Mammary epithelial cell (primary cell): ENCODE measurements at regions of chrX and their contacts with region 1.

Region 1: DNA sequence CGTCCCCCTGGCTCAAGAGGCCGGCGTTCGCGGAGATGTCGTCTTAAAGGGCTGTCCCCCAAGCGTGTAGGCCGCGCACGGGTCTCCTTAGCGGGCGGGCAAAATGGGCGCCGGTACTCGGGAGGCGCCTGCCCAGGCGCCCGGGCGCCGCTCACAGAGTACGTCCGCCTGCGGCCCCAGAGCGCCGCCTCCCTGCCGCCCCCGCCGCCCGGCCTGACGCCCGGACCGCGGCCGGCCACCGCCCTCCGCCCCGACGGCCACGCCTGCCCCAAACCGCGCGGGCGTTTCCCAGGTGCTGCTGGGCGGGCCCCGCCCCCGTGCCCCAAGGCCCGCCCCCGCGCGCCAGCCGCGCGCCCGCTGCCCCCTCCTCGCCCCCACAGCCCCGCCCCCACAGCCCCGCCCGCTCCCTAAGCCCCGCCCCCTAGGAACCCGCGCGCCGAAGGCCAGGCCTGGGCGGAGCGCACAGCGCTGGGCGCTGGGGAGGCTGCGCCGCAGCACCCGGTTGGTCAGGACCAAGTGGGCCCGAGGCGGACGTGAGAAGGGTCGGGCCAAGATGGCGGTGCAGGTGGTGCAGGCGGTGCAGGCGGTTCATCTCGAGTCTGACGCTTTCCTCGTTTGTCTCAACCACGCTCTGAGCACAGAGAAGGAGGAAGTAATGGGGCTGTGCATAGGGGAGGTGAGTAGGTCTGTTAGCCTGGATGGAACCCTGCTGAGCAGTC is at the starts of genes BRCC3, CMC4 and MTCP1:
- DNase-seq: peak; percentile 75
- H3K4me3 ChIP-seq: peak within 1 kb of the TSS; percentile 69 to 82 (median 75)
- H3K27ac ChIP-seq: peak within 1 kb of the TSS; percentile 78
- H3K4me1 ChIP-seq: peaks cover 14% of the 10 kb centered on the region
- H3K27me3 ChIP-seq: no peaks in the 10 kb centered on the region
- CTCF ChIP-seq: no peak
- total RNA-seq, gene BRCC3: 10.2 to 22.1 TPM
- total RNA-seq, gene CMC4: 6.6 to 10.7 TPM
- total RNA-seq, gene MTCP1: 1.8 to 23.4 TPM

Region 2: GRCh38 chrX:154986826-154987576 is 84.1 kb before region 1 on chrX:
- CTCF ChIA-PET with region 1: no interaction called
- dilution Hi-C with region 1: loop called (anchors 5 kb)
- in situ Hi-C with region 1: no loop called
- intact Hi-C with region 1: loop called (anchors 5 kb)
- DNase-seq: no peak
- H3K4me3 ChIP-seq: no peak overlapping the region
- H3K27ac ChIP-seq: no peak overlapping the region
- H3K4me1 ChIP-seq: peaks cover 5% of the 10 kb centered on the region
- H3K27me3 ChIP-seq: no peaks in the 10 kb centered on the region
- CTCF ChIP-seq: peak in 1 of 2 donors; percentile 35

Region 3: GRCh38 chrX:155001873-155002272 is 69.3 kb before region 1 on chrX:
- CTCF ChIA-PET with region 1: no interaction called
- dilution Hi-C with region 1: no loop called
- in situ Hi-C with region 1: no loop called
- intact Hi-C with region 1: no loop called
- DNase-seq: no peak
- H3K4me3 ChIP-seq: no peak overlapping the region
- H3K27ac ChIP-seq: no peak overlapping the region
- H3K4me1 ChIP-seq: no peaks in the 10 kb centered on the region
- H3K27me3 ChIP-seq: no peaks in the 10 kb centered on the region
- CTCF ChIP-seq: no peak

Region 4: DNA sequence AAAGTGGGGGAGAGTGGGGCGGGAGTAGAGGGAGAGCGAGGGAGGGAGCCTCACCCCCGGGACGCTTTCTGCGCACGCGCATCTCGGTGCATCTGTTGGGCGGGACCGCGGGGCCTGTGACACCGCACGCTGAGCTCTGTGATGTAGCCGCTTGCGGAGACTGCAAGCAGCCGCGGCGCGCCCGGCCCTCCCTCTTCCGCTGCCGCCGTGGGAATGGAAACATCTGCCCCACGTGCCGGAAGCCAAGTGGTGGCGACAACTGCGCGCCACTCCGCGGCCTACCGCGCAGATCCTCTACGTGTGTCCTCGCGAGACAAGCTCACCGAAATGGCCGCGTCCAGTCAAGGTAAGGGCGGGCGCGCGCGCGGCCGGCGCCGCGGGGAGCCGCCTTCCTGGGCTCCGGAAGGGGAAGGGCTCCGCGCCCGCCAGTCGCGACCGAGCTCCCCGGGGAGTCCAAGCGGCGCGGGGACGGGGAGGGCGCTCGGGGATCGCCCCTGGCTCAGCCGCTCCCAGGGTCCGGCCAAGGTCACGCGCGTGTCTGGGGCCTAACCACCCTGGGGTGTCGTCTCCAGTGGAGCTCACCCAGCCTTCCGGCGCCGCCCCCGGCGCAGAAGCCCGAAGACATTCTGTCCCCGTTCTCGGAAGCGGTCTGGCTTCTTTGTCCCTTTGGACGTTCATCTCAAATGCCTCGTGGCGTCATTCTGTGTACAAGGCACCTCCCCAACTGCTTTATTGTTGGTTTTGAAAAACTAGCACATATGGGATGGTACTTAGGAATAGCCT is 44.2 kb before region 1 on chrX and contains the start of gene FUNDC2:
- CTCF ChIA-PET with region 1: no interaction called
- dilution Hi-C with region 1: no loop called
- in situ Hi-C with region 1: no loop called
- intact Hi-C with region 1: loop called (anchors 2 kb)
- DNase-seq: peak; percentile 91
- H3K4me3 ChIP-seq: peak within 1 kb of the TSS; percentile 53 to 65 (median 63)
- H3K27ac ChIP-seq: peak within 1 kb of the TSS; percentile 90
- H3K4me1 ChIP-seq: peaks cover 7% of the 10 kb centered on the region
- H3K27me3 ChIP-seq: no peaks in the 10 kb centered on the region
- CTCF ChIP-seq: no peak
- total RNA-seq, gene FUNDC2: 28.2 to 34.0 TPM

Region 5: GRCh38 chrX:155293771-155294170 is 222.6 kb after region 1 on chrX:
- CTCF ChIA-PET with region 1: no interaction called
- dilution Hi-C with region 1: no loop called
- in situ Hi-C with region 1: no loop called
- intact Hi-C with region 1: no loop called
- DNase-seq: no peak
- H3K4me3 ChIP-seq: no peak overlapping the region
- H3K27ac ChIP-seq: no peak overlapping the region
- H3K4me1 ChIP-seq: no peaks in the 10 kb centered on the region
- H3K27me3 ChIP-seq: no peaks in the 10 kb centered on the region
- CTCF ChIP-seq: no peak

Region 6: GRCh38 chrX:155417769-155418168 is 346.6 kb after region 1 on chrX:
- CTCF ChIA-PET with region 1: no interaction called
- dilution Hi-C with region 1: no loop called
- in situ Hi-C with region 1: no loop called
- intact Hi-C with region 1: no loop called
- DNase-seq: no peak
- H3K4me3 ChIP-seq: no peak overlapping the region
- H3K27ac ChIP-seq: no peak overlapping the region
- H3K4me1 ChIP-seq: no peaks in the 10 kb centered on the region
- H3K27me3 ChIP-seq: no peaks in the 10 kb centered on the region
- CTCF ChIP-seq: no peak